CD14-positive monocyte (primary cell): ENCODE measurements at regions of chr17 and their contacts with region 1.

Region 1: DNA sequence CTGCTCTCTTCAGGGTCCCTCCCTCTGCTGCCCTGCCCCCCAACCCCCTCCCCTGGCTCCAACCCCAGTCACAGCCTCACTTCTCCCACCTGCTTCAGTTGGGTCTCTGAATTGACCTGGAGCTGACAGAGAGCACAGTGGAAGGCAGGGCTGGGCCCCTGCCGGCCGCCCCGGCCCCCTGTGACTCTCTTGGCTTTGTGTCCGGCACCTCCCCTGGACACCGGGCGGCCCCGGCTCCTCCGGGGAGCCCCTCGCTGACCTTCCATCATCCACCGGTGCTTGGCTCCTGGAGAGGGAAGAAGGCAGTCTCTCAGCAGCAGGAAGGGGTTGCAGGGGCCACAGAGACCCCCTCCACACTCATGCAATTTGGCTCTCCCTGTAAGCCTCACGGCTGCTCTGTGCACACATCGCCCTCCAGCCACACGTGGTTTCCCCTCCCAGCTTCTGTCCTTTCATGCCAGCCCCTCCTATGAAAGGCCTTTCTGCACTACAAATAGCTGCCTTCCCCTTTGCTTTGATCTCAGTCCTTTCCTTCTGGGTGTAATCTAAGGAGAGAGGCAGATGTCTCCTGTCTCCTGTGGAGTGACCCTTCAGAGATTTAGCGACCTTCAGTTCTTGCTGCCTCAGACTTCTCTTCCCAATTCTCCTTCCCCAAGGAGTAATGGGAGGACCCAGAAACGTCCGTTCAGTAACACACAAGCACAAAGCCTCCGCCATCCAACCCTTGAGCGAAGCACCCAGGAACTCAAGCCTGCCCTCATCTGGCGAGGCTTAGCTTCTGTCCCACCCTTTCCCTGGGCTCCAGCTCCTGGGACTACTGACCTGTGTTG is 8.3 kb downstream of the NKIRAS2 start:
- DNase-seq: peak in 1 of 3 donors; percentile 14
- H3K4me3 ChIP-seq: no peak overlapping the region
- H3K4me3 Mint-ChIP-seq: peak overlapping the region in 1 of 2 donors; percentile 17
- H3K27ac ChIP-seq: no peak overlapping the region
- H3K27ac Mint-ChIP-seq: peak overlapping the region in 3 of 7 donors; percentile 21 to 73 (median 28)
- H3K4me1 ChIP-seq: peaks cover 46 to 53% of the 10 kb centered on the region in 2 donors
- H3K4me1 Mint-ChIP-seq: peaks cover 51% of the 10 kb centered on the region
- H3K27me3 ChIP-seq: no peaks in the 10 kb centered on the region
- H3K27me3 Mint-ChIP-seq: peaks cover 0 to 5% (median 4%) of the 10 kb centered on the region in 3 donors
- CTCF ChIP-seq: peak; percentile 22

Region 2: DNA sequence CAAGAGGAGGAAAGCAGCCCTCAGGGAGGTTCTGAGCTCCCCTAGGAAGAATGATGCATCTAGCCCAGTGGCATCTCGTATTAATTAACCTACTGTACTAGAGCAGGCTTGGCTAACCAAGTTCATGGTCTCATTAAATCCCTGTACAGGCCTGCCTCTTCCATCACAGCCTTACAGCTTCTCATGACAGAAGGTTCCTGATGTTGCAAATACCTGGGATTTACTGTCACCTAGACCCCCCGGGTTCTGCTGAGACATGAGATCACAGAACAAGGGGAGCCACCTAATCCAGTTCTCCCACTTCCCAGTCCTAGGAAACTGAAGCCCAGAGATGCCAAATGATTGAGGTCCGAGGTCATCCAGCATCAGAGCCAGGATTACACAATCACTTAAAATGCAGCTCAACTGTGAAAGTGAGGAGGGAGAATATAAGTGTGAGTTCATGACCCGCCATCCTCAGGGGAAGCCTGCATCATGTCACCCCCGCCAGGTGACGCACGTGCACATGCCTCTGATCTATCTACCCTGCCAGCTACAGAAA is 133.3 kb before region 1 on chr17:
- intact Hi-C with region 1: no loop called
- DNase-seq: no peak
- H3K4me3 ChIP-seq: no peak overlapping the region
- H3K4me3 Mint-ChIP-seq: no peak overlapping the region
- H3K27ac ChIP-seq: no peak overlapping the region
- H3K27ac Mint-ChIP-seq: no peak overlapping the region
- H3K4me1 ChIP-seq: no peaks in the 10 kb centered on the region
- H3K4me1 Mint-ChIP-seq: no peaks in the 10 kb centered on the region
- H3K27me3 ChIP-seq: no peaks in the 10 kb centered on the region
- H3K27me3 Mint-ChIP-seq: peaks cover 0 to 3% (median 0%) of the 10 kb centered on the region in 3 donors
- CTCF ChIP-seq: no peak

Region 3: GRCh38 chr17:42039794-42040763 is 11.9 kb after region 1 on chr17:
- intact Hi-C with region 1: no loop called
- DNase-seq: no peak
- H3K4me3 ChIP-seq: peak overlapping the region in 1 of 3 experiments; percentile 55
- H3K4me3 Mint-ChIP-seq: peak overlapping the region; percentile 64 to 79
- H3K27ac ChIP-seq: no peak overlapping the region
- H3K27ac Mint-ChIP-seq: no peak overlapping the region
- H3K4me1 ChIP-seq: peaks cover 3 to 10% of the 10 kb centered on the region in 2 donors
- H3K4me1 Mint-ChIP-seq: peaks cover 6% of the 10 kb centered on the region
- H3K27me3 ChIP-seq: peaks cover 0 to 5% of the 10 kb centered on the region in 2 donors
- H3K27me3 Mint-ChIP-seq: peaks cover 3 to 19% (median 5%) of the 10 kb centered on the region in 3 donors
- CTCF ChIP-seq: no peak

Region 4: GRCh38 chr17:42061646-42062487 is 33.7 kb after region 1 on chr17:
- intact Hi-C with region 1: loop called in 1 of 2 experiments (anchors 5 kb)
- DNase-seq: no peak
- H3K4me3 ChIP-seq: no peak overlapping the region
- H3K4me3 Mint-ChIP-seq: peak overlapping the region in 1 of 2 donors; percentile 21
- H3K27ac ChIP-seq: no peak overlapping the region
- H3K27ac Mint-ChIP-seq: peak overlapping the region in 2 of 7 donors; percentile 6 to 52
- H3K4me1 ChIP-seq: peaks cover 15 to 16% of the 10 kb centered on the region in 2 donors
- H3K4me1 Mint-ChIP-seq: peaks cover 27% of the 10 kb centered on the region
- H3K27me3 ChIP-seq: no peaks in the 10 kb centered on the region
- H3K27me3 Mint-ChIP-seq: peaks cover 0 to 3% (median 2%) of the 10 kb centered on the region in 3 donors
- CTCF ChIP-seq: no peak

Region 5: DNA sequence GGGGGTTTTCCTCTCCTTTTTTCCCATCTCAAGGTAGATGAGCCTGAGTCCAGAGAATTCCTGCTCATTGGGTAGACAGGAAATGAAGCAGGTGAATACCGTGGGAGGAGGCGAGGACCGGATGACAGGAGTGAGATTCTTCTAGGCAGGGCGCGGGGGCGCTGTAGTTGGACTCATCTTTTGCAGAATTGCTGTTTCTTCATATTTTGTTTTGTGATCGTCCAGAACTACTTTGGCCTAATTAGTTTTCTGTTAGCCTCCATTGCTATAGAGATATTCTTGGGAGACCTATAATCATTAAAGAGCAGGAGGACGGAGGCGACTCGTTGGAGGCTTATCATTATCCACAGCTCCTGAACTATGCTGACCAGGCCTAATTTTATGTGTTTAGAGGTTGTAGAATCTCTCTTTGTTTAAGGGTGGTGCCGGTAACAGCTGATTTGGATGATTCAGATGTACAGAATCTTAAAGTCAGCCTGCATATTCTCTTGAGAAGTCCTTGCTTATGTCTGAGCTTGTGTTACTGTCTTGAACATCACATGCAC is 431.2 kb after region 1 on chr17:
- intact Hi-C with region 1: no loop called
- DNase-seq: peak in 1 of 3 donors; percentile 15
- H3K4me3 ChIP-seq: peak overlapping the region; percentile 80 to 96 (median 87)
- H3K4me3 Mint-ChIP-seq: peak overlapping the region; percentile 97 to 98
- H3K27ac ChIP-seq: peak overlapping the region; percentile 82 to 84
- H3K27ac Mint-ChIP-seq: peak overlapping the region; percentile 91 to 99 (median 97)
- H3K4me1 ChIP-seq: peaks cover 58 to 63% of the 10 kb centered on the region in 2 donors
- H3K4me1 Mint-ChIP-seq: peaks cover 60% of the 10 kb centered on the region
- H3K27me3 ChIP-seq: no peaks in the 10 kb centered on the region
- H3K27me3 Mint-ChIP-seq: peaks cover 0 to 2% (median 0%) of the 10 kb centered on the region in 3 donors
- CTCF ChIP-seq: peak; percentile 35